ENCODE measurements at regions of chr18 and their contacts with region 1.

Region 1: DNA sequence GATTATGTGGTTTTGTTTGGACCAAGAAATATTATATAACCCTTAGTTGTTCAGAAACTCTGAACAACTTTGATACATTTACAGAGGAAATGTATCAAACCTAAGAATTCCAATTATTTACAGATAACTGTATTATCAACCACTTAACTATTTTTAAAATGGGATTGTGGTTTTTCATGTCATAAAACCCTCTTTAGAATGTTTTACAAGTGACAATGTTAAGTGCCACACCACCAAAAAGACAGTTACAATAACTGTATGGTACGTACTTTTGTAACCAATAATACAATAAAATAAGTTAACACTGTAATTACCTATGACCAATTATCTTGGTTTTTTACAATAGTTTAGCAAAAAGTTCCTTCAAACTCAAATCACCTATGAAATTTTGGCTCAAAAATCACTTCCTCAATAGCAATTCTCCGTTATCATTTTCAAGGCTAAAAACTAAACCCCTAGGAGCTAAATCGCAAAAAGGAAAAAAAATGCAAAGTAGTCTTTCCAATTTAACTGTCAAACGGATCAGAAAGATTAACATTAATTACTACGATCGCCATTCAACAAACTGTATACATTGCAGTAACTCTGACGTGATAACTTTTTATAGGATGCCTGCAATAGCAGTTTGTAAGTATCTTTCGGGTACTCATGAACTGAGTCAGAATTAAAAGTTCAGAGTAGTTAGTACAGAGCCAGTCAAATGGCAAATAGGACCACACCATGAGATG is 1.5 kb downstream of the ROCK1 start:
- DNase-seq: no peak
- H3K4me3 ChIP-seq: peak overlapping the region; percentile 96
- H3K27ac ChIP-seq: peak overlapping the region; percentile 97
- H3K4me1 ChIP-seq: peaks cover 78% of the 10 kb centered on the region
- H3K27me3 ChIP-seq: no peaks in the 10 kb centered on the region
- CTCF ChIP-seq: no peak

Region 2: GRCh38 chr18:21040466-21040865 is 69.6 kb before region 1 on chr18:
- intact Hi-C with region 1: no loop called
- DNase-seq: no peak
- H3K4me3 ChIP-seq: no peak overlapping the region
- H3K27ac ChIP-seq: no peak overlapping the region
- H3K4me1 ChIP-seq: peaks cover 27% of the 10 kb centered on the region
- H3K27me3 ChIP-seq: no peaks in the 10 kb centered on the region
- CTCF ChIP-seq: no peak

Region 3: GRCh38 chr18:21053127-21053526 is 57.0 kb before region 1 on chr18:
- intact Hi-C with region 1: loop called (anchors 10 kb)
- DNase-seq: no peak
- H3K4me3 ChIP-seq: no peak overlapping the region
- H3K27ac ChIP-seq: no peak overlapping the region
- H3K4me1 ChIP-seq: peaks cover 56% of the 10 kb centered on the region
- H3K27me3 ChIP-seq: no peaks in the 10 kb centered on the region
- CTCF ChIP-seq: no peak

Region 4: GRCh38 chr18:21141668-21142422 is 31.7 kb after region 1 on chr18:
- intact Hi-C with region 1: no loop called
- DNase-seq: no peak
- H3K4me3 ChIP-seq: no peak overlapping the region
- H3K27ac ChIP-seq: no peak overlapping the region
- H3K4me1 ChIP-seq: peaks cover 8% of the 10 kb centered on the region
- H3K27me3 ChIP-seq: no peaks in the 10 kb centered on the region
- CTCF ChIP-seq: no peak

Region 5: GRCh38 chr18:21163647-21164547 is 53.8 kb after region 1 on chr18:
- intact Hi-C with region 1: no loop called
- DNase-seq: no peak
- H3K4me3 ChIP-seq: no peak overlapping the region
- H3K27ac ChIP-seq: peak overlapping the region; percentile 63
- H3K4me1 ChIP-seq: no peaks in the 10 kb centered on the region
- H3K27me3 ChIP-seq: no peaks in the 10 kb centered on the region
- CTCF ChIP-seq: no peak